Heart left ventricle (tissue), 16 donors: ENCODE measurements at regions of chr1 and their contacts with region 1.

Region 1: DNA sequence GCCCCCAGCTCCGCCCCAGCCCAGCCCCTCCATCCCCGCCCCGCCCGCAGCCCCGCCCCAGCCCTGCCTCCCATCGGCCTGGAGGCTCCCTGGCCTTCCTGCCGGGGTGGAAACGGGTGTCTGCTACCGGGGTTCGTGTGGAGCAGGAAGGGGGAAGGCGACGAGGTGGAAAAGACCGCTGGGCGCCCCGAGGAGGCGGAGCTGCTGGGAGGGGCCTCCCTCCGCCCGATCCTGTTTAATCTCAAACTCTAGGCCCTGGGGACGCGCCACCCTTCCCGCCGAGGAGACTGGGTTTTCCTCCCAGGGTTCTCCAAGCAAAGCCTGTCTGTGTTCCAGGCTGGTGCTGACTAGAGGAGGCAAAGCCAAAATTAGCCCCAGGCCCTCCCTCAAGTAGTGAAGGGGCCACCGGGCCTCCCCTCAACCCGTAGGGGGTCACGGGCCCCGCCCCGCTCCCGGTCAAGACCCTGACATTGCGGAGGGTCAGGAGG is 16.2 kb upstream of the TTLL10 start:
- DNase-seq: peak; percentile 91 to 94 (median 93)
- ATAC-seq: peak; percentile 86 to 96 (median 92)
- H3K4me3 ChIP-seq: peak overlapping the region; percentile 27 to 87 (median 70)
- H3K27ac ChIP-seq: peak overlapping the region; percentile 92 to 100 (median 97)
- H3K4me1 ChIP-seq: peaks cover 3 to 15% (median 12%) of the 10 kb centered on the region in 12 donors
- H3K27me3 ChIP-seq: peaks cover under 1 to 15% (median 9%) of the 10 kb centered on the region in 9 donors
- CTCF ChIP-seq: no peak
- POLR2A ChIP-seq: peak in 1 of 2 donors; percentile 75

Region 2: DNA sequence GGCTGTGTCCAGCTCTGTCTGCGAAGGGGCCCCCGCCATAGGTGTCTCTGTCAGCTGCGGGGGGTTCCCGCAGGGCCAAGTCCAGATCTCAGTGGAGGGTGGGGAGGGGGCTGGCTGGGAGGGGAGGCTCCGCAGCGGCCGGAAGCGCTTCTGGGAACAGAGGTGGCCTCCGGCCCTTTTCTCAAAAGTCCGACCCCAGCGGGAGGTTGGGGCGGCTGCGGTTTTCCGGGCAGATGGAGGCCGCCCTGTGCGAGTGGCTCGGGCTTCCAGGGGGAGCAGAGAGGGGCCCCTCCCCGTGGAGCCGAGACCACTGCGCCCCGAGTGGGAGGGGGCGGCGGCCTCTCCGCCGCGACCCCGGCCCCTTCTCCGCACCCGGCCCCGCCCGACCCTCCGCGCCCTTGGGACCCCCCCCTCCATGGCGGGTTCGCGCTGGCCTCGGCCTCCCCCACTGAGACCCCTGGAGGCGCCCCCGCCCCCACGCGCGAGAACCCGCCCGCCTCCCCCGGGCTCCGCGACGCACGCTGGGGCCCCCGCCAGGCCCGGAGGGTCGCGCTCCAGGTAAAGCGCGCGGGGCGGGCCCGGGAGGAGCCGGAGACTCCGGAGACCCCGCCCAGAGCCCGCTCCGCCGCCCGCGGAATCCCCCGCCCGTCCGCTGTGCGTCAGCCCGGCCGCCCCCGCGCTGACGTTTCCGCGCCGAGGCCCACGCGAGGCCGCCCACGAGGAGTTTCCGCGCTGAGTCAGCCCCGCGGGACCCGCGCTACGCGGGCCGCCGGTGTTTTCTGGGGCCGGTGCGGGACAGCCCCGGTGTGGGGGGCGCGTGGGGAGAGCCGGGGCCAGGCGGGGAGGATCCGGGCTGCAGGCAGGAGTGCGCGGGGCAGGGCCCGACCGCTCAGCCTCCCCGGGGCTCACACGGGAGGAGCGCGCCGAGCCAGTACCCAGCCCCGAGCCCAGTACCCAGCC is 43.7 kb after region 1 on chr1:
- intact Hi-C with region 1: loop called in 2 of 10 experiments (anchors 5 kb)
- DNase-seq: peak; percentile 59 to 85 (median 75)
- ATAC-seq: peak in 3 of 4 donors; percentile 35 to 76 (median 67)
- H3K4me3 ChIP-seq: peak overlapping the region; percentile 26 to 62 (median 52)
- H3K27ac ChIP-seq: peak overlapping the region in 5 of 12 donors; percentile 51 to 71 (median 64)
- H3K4me1 ChIP-seq: peaks cover 0 to 18% (median 10%) of the 10 kb centered on the region in 12 donors
- H3K27me3 ChIP-seq: peaks cover 0 to 44% (median 11%) of the 10 kb centered on the region in 9 donors
- CTCF ChIP-seq: no peak
- POLR2A ChIP-seq: no peak

Region 3: GRCh38 chr1:1212780-1213344 is 55.4 kb after region 1 on chr1:
- intact Hi-C with region 1: loop called in 1 of 10 experiments (anchors 2 kb)
- DNase-seq: peak; percentile 64 to 86 (median 74)
- ATAC-seq: peak; percentile 21 to 78 (median 44)
- H3K4me3 ChIP-seq: peak overlapping the region; percentile 3 to 64 (median 52)
- H3K27ac ChIP-seq: peak overlapping the region in 11 of 12 donors; percentile 23 to 86 (median 81)
- H3K4me1 ChIP-seq: peaks cover 0 to 56% (median 27%) of the 10 kb centered on the region in 12 donors
- H3K27me3 ChIP-seq: peaks cover 0 to 4% (median 0%) of the 10 kb centered on the region in 9 donors
- CTCF ChIP-seq: no peak
- POLR2A ChIP-seq: no peak

Region 4: GRCh38 chr1:1231400-1232223 is 74.1 kb after region 1 on chr1 and contains the start of gene SDF4:
- intact Hi-C with region 1: loop called in 1 of 10 experiments (anchors 1 kb)
- DNase-seq: peak; percentile 97 to 99 (median 98)
- ATAC-seq: peak; percentile 96 to 98 (median 97)
- H3K4me3 ChIP-seq: peak within 1 kb of the TSS; percentile 81 to 100 (median 98)
- H3K27ac ChIP-seq: peak within 1 kb of the TSS; percentile 92 to 99 (median 97)
- H3K4me1 ChIP-seq: peaks cover 8 to 49% (median 31%) of the 10 kb centered on the region in 12 donors
- H3K27me3 ChIP-seq: no peaks in the 10 kb centered on the region
- CTCF ChIP-seq: no peak
- POLR2A ChIP-seq: no peak
- total RNA-seq, gene SDF4: 102 to 167 (median 120) TPM